ENCODE measurements at regions of chr1 and their contacts with region 1.

Region 1: GRCh38 chr1:236489710-236490377 is 33.9 kb upstream of the LGALS8 start:
- DNase-seq: no peak
- H3K4me3 ChIP-seq: peak overlapping the region; percentile 23
- H3K27ac ChIP-seq: no peak overlapping the region
- H3K4me1 ChIP-seq: peaks cover 17% of the 10 kb centered on the region
- H3K27me3 ChIP-seq: no peaks in the 10 kb centered on the region
- CTCF ChIP-seq: peak; percentile 68

Region 2: DNA sequence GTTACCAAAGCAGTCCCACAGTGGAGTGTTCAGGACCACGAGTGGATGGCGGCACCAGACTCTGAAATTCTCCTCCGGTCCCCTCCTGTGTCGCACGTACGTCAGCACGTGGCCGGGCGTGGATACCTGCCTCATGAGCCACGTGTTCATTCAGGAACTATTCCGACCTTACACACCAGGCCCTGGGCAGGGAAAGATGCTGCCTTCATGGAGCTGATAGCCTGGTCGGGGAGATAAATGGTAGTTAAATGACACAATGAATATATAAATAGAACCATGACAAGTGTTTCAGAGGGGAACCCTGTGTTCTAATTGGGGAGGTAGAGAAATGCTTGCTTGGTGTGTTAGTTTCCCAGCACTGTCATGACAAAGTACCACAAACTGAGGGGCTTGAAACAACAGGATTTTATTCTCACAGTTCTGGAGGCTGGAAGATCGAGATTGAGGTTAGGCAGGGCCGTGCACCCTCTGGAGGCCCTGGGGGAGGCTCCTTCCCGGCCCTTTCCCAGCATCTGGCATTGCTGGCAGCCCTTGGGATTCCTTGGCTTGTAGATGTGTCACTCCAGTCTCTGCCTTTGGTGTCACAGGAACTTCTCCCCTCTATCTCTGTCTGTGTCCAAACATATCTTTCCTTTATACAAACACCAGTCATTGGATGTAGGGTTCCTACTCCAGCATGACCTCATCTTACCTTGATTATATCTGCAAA is 376.4 kb before region 1 on chr1:
- intact Hi-C with region 1: loop called (anchors 5 kb)
- DNase-seq: peak; percentile 30
- H3K4me3 ChIP-seq: no peak overlapping the region
- H3K27ac ChIP-seq: peak overlapping the region; percentile 81
- H3K4me1 ChIP-seq: peaks cover 13% of the 10 kb centered on the region
- H3K27me3 ChIP-seq: no peaks in the 10 kb centered on the region
- CTCF ChIP-seq: no peak

Measured in left ventricle myocardium inferior (tissue), 1 donor.